ENCODE measurements at regions of chr2 and their contacts with region 1.

Region 1: DNA sequence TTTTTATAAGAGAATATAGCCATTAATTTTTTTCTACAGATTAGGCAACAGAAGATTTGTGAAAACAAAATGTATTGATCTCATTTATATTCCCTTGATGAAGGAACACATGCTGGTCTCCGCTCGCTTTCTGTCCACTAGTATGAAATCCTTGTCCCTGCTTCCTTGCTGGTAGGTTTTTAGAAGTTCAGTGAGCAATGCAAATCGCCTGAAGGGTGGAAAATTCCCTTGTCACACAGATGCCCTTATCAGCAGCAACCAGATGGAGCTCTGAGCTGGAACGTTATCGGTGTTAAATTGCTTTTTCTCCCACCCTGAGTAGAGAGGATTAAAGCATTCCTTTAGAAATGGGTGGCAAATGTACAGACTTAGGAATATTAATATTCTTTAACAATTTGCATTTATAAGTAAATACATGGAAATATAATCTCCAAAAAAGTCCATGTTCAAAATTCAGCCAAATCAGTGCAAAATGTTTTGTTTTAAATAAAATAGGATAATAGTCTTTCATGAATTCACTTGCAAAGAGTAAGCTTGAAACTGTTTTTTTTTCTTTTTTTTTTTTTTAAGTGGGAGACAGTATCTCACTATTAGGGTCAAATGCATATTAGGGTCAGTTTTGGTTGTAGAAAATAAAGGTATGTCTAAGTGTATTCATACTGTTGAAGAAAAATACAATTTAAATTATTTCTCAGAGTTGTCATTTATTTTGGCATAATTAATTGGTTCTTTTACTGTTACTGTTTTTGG is 164.0 kb upstream of the MYO3B start:
- DNase-seq: no peak
- H3K4me3 Mint-ChIP-seq: no peak overlapping the region
- H3K27ac Mint-ChIP-seq: no peak overlapping the region
- H3K4me1 Mint-ChIP-seq: no peaks in the 10 kb centered on the region
- H3K27me3 Mint-ChIP-seq: no peaks in the 10 kb centered on the region
- CTCF ChIP-seq: no peak

Region 2: DNA sequence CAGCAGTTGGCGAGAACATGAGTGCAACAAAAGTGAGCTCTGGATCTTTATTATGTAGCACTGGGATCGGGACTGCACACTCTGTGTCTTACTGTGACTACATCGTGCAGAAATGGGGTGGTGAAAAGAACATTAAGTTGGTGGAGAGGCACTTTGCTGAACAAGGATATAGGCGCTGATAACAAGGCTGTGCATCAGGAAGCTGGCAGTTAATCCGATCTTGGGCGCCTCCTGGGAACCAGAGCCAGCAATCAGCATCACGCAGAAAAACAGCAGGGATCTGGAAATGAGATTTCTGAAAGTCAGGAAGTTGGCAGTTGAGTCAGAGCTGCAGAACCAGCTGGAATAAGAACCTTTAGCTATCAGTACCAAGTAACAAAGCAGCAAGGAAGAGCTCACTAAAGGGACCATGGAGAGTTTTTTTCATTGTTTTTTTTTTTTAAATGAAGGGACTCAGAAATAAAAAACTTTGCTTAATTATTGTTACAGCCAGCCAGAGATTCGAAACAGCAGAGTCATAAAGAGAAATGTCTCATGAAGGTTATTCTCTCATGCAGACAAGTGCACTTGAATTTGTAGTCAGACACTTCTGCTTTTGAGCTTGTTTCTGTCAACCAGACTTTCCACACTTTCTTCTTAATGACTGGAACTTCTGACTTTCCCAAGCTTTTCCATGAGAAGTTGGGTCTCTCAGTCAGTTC is 141.2 kb after region 1 on chr2:
- CTCF ChIA-PET with region 1: no interaction called
- intact Hi-C with region 1: loop called (anchors 10 kb)
- DNase-seq: peak; percentile 22
- H3K4me3 Mint-ChIP-seq: no peak overlapping the region
- H3K27ac Mint-ChIP-seq: no peak overlapping the region
- H3K4me1 Mint-ChIP-seq: peaks cover 45% of the 10 kb centered on the region
- H3K27me3 Mint-ChIP-seq: no peaks in the 10 kb centered on the region
- CTCF ChIP-seq: no peak

Measured in Calu3 (cell line).